ENCODE measurements at regions of chr14 and their contacts with region 1.

Region 1: DNA sequence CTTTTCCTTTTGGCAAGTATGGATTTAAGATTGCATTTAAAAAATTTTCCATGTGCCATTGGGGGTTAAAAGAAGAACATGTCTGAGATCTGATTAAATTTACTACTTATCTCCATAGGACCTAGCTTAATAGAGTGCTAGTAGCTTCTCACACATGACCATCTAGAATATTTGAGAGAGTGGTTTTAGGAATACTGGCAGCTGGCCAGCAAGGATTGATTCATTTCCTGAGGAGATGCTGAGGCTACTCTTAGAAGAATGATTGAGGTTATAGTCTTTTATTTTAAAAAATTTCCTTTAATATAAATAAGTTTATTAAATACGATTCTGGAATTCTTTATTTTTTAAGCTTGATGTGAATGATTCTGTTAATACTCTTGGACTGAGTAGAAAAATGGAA is 56.2 kb downstream of the MIPOL1 start:
- DNase-seq: peak; percentile 94
- ATAC-seq: peak; percentile 64
- H3K4me3 ChIP-seq: no peak overlapping the region
- H3K27ac ChIP-seq: no peak overlapping the region
- H3K4me1 ChIP-seq: peaks cover 41% of the 10 kb centered on the region
- H3K27me3 ChIP-seq: no peaks in the 10 kb centered on the region
- CTCF ChIP-seq: no peak

Region 2: DNA sequence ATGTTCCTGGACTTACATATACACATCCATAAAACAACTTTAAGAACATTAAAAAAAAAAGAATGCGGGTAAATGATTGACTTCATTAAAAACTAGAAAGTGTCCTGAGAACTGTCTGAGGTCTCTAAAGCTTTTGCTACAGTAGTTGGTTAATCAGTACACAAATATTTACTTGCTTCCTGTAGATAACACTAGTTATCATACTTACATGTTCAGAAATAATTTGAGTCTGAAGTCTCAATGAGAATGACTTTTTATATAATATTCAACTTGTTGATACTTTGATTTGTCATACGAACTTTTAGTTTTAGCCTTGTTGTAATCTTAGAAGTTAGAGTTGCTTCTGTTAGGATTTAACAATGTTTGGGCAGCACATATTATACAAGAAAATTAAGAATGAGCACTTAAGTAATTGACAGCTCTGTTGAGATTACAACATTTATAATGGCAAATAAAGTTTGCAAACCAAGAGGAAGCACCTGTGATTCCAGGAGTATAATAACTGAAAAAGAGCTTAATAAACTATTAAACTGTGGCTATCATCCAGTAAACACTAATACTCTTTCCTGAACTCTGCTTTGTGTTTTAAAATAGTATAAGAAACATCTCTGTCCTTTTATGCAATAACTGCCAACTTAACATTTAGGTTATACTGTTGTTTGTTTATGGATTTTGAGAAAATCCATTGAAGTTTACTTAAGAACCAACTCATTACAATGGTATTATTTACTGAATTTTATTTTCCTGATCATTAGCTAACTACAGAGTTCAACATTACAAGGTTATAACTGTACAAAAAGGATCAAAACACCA is 75.5 kb after region 1 on chr14:
- CTCF ChIA-PET with region 1: no interaction called
- POLR2A ChIA-PET with region 1: no interaction called
- intact Hi-C with region 1: loop called (anchors 1 kb)
- DNase-seq: peak; percentile 64
- ATAC-seq: peak; percentile 80
- H3K4me3 ChIP-seq: no peak overlapping the region
- H3K27ac ChIP-seq: peak overlapping the region; percentile 58
- H3K4me1 ChIP-seq: peaks cover 18% of the 10 kb centered on the region
- H3K27me3 ChIP-seq: no peaks in the 10 kb centered on the region
- CTCF ChIP-seq: no peak

Region 3: DNA sequence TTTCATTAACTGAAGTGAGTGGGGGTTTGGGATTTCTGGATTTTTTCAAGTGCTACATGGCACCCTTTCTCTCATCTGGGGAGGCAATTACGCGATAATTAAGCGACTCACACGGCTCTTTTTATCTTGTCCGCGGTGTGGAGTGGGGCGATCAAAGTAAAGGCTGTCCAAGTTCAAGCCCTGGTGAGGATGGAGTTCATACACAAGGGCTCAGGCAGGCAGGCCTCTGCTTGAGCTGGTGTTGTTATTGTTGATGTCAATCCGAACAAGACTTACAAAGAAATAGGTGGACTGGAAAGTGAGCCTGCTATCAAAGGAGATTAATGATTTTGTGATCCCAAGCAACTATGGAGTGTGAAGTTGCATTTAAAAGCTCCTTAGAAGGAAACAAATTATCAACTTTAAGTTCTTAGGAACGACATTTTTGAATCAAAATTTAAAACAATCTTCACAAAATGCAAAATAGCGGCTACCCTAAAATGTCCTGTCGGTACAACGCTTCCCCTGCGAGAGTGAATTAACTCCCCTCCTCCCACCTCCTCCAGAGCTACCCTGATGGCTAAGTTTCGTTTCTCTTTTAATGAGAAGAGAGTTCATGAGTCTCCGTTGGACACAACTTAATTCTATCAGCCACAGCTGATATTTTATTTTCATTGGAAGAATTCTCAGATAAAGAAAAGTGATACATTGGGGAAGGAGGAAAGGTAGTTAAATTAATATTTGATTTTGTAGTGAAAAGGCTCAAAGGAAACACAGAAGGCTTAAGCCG is 335.2 kb after region 1 on chr14:
- CTCF ChIA-PET with region 1: interaction called, 9 read pairs
- POLR2A ChIA-PET with region 1: interaction called, 7 read pairs
- intact Hi-C with region 1: loop called (anchors 1 kb)
- DNase-seq: peak; percentile 54
- ATAC-seq: no peak
- H3K4me3 ChIP-seq: peak overlapping the region; percentile 96
- H3K27ac ChIP-seq: peak overlapping the region; percentile 99
- H3K4me1 ChIP-seq: peaks cover 38% of the 10 kb centered on the region
- H3K27me3 ChIP-seq: no peaks in the 10 kb centered on the region
- CTCF ChIP-seq: no peak